PC-9 (cell line): ENCODE measurements at regions of chr14 and their contacts with region 1.

Region 1: GRCh38 chr14:75577729-75578101 is 705 bp upstream of the FLVCR2 start:
- DNase-seq: peak; percentile 83 to 93
- H3K4me3 ChIP-seq: peak overlapping the region; percentile 67
- H3K27ac ChIP-seq: peak overlapping the region; percentile 24
- H3K4me1 ChIP-seq: peaks cover 32% of the 10 kb centered on the region
- H3K27me3 ChIP-seq: no peaks in the 10 kb centered on the region
- CTCF ChIP-seq: peak; percentile 97

Region 2: DNA sequence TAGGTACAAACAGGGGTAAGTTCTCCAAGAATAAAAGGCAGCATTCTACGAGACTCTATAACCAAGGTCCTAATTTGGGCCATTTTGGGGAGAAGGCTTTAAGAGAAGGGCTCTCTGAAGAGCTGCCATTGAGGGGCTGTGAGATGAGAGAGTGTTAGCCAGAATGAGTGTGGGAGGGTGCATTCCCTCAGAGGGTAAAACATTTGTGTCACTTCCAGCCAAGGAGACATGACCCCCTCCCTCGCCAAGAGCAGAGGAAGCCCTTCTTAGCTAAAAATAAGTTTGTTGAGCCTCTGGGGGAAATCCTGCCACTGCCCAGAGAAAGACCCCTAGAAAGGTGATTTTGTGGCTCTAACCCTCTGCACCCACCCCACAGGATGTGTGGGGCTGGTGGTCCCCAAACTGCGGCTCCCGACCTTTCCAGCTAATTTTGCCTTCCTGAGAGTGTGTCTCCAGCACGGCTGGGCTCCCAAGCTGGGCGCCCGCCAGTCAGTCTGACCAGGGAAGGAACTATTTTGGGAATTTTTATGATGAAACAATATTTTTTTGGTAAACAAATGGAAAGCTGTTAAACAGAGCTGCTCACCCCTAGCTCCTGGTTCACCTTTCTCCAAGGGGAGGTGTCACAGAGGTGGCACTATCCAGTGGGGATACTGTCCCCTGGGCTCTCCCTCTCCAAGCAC is 215.8 kb before region 1 on chr14:
- CTCF ChIA-PET with region 1: no interaction called
- POLR2A ChIA-PET with region 1: no interaction called
- intact Hi-C with region 1: no loop called
- DNase-seq: no peak
- H3K4me3 ChIP-seq: no peak overlapping the region
- H3K27ac ChIP-seq: no peak overlapping the region
- H3K4me1 ChIP-seq: no peaks in the 10 kb centered on the region
- H3K27me3 ChIP-seq: peaks cover 25% of the 10 kb centered on the region; the same call in 1 of the 2 replicates
- CTCF ChIP-seq: no peak

Region 3: DNA sequence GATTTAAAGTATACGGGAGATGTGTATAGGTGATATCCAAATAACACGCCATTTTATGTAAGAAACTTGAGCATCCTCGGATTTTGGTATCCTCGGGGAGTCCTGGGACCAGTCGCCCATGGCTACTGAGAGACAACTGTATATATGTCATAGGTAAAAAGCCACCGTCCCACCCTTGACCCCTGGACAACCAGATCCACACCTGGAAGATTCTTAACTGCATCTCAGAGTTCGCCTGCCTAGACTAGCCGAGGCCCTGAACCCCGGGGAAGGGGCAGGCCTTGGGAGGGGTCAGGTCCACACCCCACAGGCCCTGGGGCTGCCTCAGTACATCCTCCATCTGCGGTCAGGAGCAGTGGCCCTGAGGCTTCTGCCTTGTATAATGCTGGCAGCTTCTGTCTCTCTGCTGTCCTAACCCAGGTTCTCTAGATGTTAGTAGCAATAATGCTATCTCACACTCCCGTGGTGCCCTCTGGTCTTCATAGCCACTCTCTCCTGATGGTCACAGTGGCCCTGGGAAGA is 113.2 kb before region 1 on chr14:
- CTCF ChIA-PET with region 1: no interaction called
- POLR2A ChIA-PET with region 1: no interaction called
- intact Hi-C with region 1: no loop called
- DNase-seq: no peak
- H3K4me3 ChIP-seq: no peak overlapping the region
- H3K27ac ChIP-seq: no peak overlapping the region
- H3K4me1 ChIP-seq: peaks cover 30% of the 10 kb centered on the region
- H3K27me3 ChIP-seq: no peaks in the 10 kb centered on the region
- CTCF ChIP-seq: no peak

Region 4: GRCh38 chr14:75654127-75654732 is 76.5 kb after region 1 on chr14:
- CTCF ChIA-PET with region 1: interaction called, 25 read pairs
- POLR2A ChIA-PET with region 1: interaction called, 5 read pairs
- intact Hi-C with region 1: loop called (anchors 1 kb)
- DNase-seq: peak; percentile 58 to 81
- H3K4me3 ChIP-seq: no peak overlapping the region
- H3K27ac ChIP-seq: no peak overlapping the region
- H3K4me1 ChIP-seq: peaks cover 6% of the 10 kb centered on the region
- H3K27me3 ChIP-seq: no peaks in the 10 kb centered on the region
- CTCF ChIP-seq: peak; percentile 95

Region 5: GRCh38 chr14:75709207-75709812 is 131.6 kb after region 1 on chr14:
- CTCF ChIA-PET with region 1: no interaction called
- POLR2A ChIA-PET with region 1: no interaction called
- intact Hi-C with region 1: loop called (anchors 1 kb)
- DNase-seq: peak; percentile 49 to 58
- H3K4me3 ChIP-seq: no peak overlapping the region
- H3K27ac ChIP-seq: no peak overlapping the region
- H3K4me1 ChIP-seq: peaks cover 30% of the 10 kb centered on the region
- H3K27me3 ChIP-seq: no peaks in the 10 kb centered on the region
- CTCF ChIP-seq: peak; percentile 87

Region 6: DNA sequence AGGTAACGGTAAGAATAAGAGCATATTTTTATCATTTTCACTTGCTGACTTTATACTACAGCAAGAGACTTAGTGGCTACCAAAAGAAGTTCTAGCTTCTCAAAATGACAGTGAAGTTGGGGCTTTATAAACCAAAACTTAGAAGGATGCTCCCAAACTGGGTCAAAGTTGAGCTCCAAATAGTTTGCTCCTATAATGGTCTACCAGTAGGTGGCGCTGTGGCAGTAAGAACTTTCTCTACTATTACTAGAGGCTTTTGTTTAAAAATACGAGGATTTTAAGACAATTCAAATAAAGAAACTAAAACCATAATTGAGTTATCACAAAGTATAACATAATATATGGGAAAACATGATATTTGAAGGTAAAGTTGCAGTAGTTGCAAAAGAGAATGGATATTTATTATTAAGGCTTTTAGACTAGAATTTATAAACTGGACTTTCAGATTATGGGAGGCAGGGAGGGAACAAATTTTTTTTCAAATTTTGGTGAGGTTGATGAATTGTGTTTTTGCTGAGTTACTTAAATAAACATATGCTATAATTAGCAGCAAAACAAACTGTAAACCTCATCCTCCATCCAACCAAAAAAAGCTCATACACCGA is 329.1 kb after region 1 on chr14:
- CTCF ChIA-PET with region 1: interaction called, 9 read pairs
- POLR2A ChIA-PET with region 1: no interaction called
- intact Hi-C with region 1: loop called (anchors 2 kb)
- DNase-seq: peak; percentile 60 to 64
- H3K4me3 ChIP-seq: no peak overlapping the region
- H3K27ac ChIP-seq: no peak overlapping the region
- H3K4me1 ChIP-seq: no peaks in the 10 kb centered on the region
- H3K27me3 ChIP-seq: no peaks in the 10 kb centered on the region
- CTCF ChIP-seq: peak; percentile 100

Region 7: GRCh38 chr14:76151398-76152339 is 574.0 kb after region 1 on chr14 and contains the start of gene GPATCH2L:
- CTCF ChIA-PET with region 1: no interaction called
- POLR2A ChIA-PET with region 1: no interaction called
- intact Hi-C with region 1: loop called (anchors 5 kb)
- DNase-seq: peak; percentile 84 to 99
- H3K4me3 ChIP-seq: peak within 1 kb of the TSS; percentile 82
- H3K27ac ChIP-seq: peak within 1 kb of the TSS; percentile 52
- H3K4me1 ChIP-seq: peaks cover 35% of the 10 kb centered on the region
- H3K27me3 ChIP-seq: peaks cover 41% of the 10 kb centered on the region
- CTCF ChIP-seq: no peak
- total RNA-seq, gene GPATCH2L: 124 and 142 TPM in 2 replicates

Region 8: DNA sequence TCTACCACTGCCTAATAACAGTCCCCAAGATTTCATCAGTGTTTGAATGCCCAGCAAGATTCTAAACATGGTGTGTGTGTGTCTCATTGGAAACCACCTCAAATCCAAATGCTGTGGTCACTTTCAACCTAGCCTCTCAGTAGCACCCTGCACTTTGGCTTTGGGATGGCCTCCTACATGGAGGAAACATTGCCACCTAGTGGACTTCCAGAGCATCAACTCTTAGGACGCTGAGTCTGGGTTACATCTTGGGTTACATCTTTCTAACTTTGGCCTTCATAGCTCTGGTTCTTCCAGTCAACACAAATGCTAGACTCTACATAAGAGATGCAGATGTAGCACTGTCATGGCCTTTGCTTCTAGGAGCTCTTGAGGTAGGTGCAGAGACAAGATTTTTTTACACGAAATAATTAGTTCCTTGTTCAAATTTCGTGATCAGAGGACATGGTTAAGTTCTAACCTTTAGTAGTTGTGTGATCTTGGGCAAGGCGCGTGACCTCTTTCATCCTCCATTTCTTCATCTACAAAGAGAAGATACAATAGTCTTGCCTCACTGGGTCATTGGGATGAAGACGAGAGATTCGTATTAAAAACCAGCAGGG is 1070.1 kb after region 1 on chr14:
- CTCF ChIA-PET with region 1: no interaction called
- POLR2A ChIA-PET with region 1: no interaction called
- intact Hi-C with region 1: loop called (anchors 5 kb)
- DNase-seq: peak; percentile 47 to 52
- H3K4me3 ChIP-seq: no peak overlapping the region
- H3K27ac ChIP-seq: no peak overlapping the region
- H3K4me1 ChIP-seq: no peaks in the 10 kb centered on the region
- H3K27me3 ChIP-seq: peaks cover 89% of the 10 kb centered on the region
- CTCF ChIP-seq: peak; percentile 95